Spleen (tissue), 13 donors: ENCODE measurements at regions of chr3 and their contacts with region 1.

Region 1: DNA sequence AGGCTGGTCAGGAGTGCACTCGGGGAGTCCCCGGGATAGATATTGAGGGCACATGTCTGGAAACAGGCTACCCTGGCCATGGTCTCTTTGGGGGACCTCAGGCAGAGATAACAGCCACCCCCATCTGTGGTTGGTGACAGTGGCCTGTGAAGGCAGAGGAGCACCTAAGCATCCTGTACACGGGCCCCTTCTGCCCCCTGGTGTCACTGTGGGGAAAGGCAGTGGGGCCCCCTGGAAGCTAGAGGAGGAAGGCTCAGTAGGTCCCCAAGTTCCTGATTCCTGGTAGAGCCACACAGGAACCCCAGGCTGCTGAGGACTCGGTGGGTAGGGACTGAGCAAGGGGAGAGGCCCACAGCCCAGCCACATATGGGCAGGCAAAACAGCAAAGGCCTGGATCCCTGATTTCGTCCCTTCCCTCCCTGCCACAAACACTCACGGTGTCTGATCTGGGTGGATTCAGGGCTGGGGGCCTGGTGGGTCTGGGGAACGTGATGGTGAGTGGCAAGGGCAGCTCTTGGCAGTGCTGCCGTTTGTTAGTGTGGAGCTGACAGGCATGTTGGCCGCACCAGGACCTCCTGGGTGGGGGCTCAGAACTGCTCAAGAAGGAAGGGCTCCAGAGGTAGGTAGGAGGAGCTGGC is 14.1 kb upstream of the CXCR6 start:
- DNase-seq: peak; percentile 83
- H3K4me3 ChIP-seq: no peak overlapping the region
- H3K27ac ChIP-seq: no peak overlapping the region
- H3K4me1 ChIP-seq: peaks cover 0 to 17% (median 0%) of the 10 kb centered on the region in 6 donors
- H3K27me3 ChIP-seq: no peaks in the 10 kb centered on the region
- CTCF ChIP-seq: peak; percentile 69 to 90 (median 77)
- POLR2A ChIP-seq: no peak

Region 2: DNA sequence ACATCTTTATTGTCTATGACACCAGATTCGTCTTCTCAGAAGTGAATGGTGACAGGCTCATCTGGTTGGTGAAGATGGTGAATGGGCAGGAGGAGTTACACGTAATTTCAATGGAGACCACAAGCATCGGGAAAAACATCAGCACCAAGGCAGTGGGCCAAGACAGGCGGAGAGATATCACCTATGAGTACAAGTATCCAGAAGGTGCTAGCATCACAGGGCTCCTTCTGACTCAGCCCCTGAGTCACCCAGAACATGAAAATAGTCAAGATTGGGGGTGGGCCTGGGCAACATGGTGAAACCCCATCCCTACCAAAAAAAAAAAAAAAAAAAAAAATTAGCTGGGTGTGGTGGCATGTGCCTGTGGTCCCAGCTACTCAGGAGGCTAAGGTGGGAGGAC is 1022.2 kb before region 1 on chr3:
- intact Hi-C with region 1: no loop called
- DNase-seq: no peak
- H3K4me3 ChIP-seq: no peak overlapping the region
- H3K27ac ChIP-seq: no peak overlapping the region
- H3K4me1 ChIP-seq: no peaks in the 10 kb centered on the region
- H3K27me3 ChIP-seq: peaks cover 0 to 14% (median 0%) of the 10 kb centered on the region in 7 donors
- CTCF ChIP-seq: no peak
- POLR2A ChIP-seq: no peak

Region 3: GRCh38 chr3:45760878-45761711 is 168.1 kb before region 1 on chr3:
- intact Hi-C with region 1: loop called (anchors 2 kb)
- DNase-seq: no peak
- H3K4me3 ChIP-seq: no peak overlapping the region
- H3K27ac ChIP-seq: no peak overlapping the region
- H3K4me1 ChIP-seq: peaks cover 0 to 8% (median 4%) of the 10 kb centered on the region in 6 donors
- H3K27me3 ChIP-seq: peaks cover 0 to 16% (median 0%) of the 10 kb centered on the region in 7 donors
- CTCF ChIP-seq: peak; percentile 22 to 79 (median 66)
- POLR2A ChIP-seq: no peak

Region 4: GRCh38 chr3:46549408-46549904 is 620.3 kb after region 1 on chr3:
- intact Hi-C with region 1: no loop called
- DNase-seq: no peak
- H3K4me3 ChIP-seq: no peak overlapping the region
- H3K27ac ChIP-seq: no peak overlapping the region
- H3K4me1 ChIP-seq: peaks cover 0 to 15% (median 0%) of the 10 kb centered on the region in 6 donors
- H3K27me3 ChIP-seq: peaks cover 0 to 5% (median 0%) of the 10 kb centered on the region in 7 donors
- CTCF ChIP-seq: no peak
- POLR2A ChIP-seq: no peak

Region 5: GRCh38 chr3:46574243-46574646 is 645.1 kb after region 1 on chr3:
- intact Hi-C with region 1: no loop called
- DNase-seq: no peak
- H3K4me3 ChIP-seq: no peak overlapping the region
- H3K27ac ChIP-seq: no peak overlapping the region
- H3K4me1 ChIP-seq: peaks cover 0 to 21% (median 13%) of the 10 kb centered on the region in 6 donors
- H3K27me3 ChIP-seq: peaks cover 0 to 13% (median 0%) of the 10 kb centered on the region in 7 donors
- CTCF ChIP-seq: no peak
- POLR2A ChIP-seq: no peak